GM13976 (cell line): ENCODE measurements at regions of chr4 and their contacts with region 1.

Region 1: GRCh38 chr4:173494013-173494970 is 35.7 kb downstream of the HAND2 start:
- DNase-seq: peak; percentile 80
- CTCF ChIP-seq: peak; percentile 66

Region 2: GRCh38 chr4:173243917-173244658 is 250.2 kb before region 1 on chr4:
- in situ Hi-C with region 1: no loop called
- DNase-seq: no peak
- CTCF ChIP-seq: no peak

Region 3: DNA sequence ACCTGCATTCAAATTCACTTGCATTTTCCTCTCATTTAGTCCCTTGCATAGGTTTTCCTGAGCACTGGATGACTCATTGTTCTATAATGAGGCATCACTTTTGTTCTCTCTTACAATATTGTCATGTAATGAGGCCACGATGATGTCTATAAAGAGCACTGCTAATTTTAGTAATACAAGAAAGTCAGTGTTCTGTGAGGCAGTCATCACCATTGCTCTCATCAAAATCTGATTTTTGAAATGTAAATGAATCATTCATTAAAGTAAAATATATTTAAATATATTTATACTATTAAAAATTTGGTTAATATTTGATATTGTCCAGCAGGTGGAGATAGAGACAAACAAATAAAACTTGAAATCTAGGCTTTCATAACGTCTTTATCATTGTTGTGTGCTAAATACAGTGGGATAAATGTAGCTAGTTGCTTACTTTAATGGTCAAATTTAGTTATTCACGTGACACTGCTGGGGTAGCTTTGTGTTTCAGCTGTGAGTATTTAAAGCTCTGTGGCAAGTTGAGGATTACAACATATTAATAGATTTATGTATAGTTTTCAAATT is 175.6 kb before region 1 on chr4:
- in situ Hi-C with region 1: loop called (anchors 10 kb)
- DNase-seq: no peak
- CTCF ChIP-seq: no peak

Region 4: GRCh38 chr4:173398779-173399415 is 95.4 kb before region 1 on chr4 and contains the start of gene SCRG1:
- in situ Hi-C with region 1: no loop called
- DNase-seq: no peak
- CTCF ChIP-seq: no peak

Region 5: GRCh38 chr4:173591760-173592159 is 97.5 kb after region 1 on chr4:
- in situ Hi-C with region 1: no loop called
- DNase-seq: no peak
- CTCF ChIP-seq: no peak

Region 6: DNA sequence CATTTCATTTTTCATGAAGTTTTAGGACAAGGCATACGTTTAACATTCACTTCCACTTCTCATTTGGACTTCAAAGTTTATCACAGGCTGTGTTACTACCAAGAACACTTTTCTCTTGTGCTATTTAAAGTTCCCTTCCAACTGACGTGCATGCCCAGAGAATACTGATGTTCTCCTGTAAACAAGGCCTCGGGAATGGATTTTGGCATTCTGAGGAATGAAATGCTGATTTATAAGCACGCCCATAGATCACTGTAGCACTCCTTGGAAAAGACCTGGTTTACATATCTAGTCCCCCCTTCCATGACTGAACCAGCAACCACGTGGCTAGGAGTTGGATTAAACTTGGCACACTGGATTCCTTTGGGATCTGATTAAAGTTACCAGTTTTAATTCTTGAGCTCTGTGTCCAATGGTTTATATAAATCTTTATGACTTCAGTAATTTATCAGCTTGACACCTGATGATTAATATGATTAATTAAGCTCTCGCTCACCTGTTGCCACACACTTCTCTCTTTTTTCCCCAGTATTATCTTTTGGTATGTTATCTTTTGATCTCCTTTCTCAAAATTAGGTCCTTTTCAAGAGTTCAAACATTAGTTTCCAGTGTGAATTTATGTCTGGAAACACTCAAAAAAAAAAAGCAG is 158.1 kb after region 1 on chr4:
- in situ Hi-C with region 1: no loop called
- DNase-seq: no peak
- CTCF ChIP-seq: no peak